Activated T-helper 2 cell treated with anti-CD3 and anti-CD28 coated beads, Interferon-gamma antibody, Interleukin-2, Interleukin-4, amounts not matched to agents 10 μg/mL and 5 μg/mL and 100 μg/mL, durations not matched to agents 14 hours and 24 hours and 36 hours (primary cell): ENCODE measurements at regions of chr14 and their contacts with region 1.

Region 1: DNA sequence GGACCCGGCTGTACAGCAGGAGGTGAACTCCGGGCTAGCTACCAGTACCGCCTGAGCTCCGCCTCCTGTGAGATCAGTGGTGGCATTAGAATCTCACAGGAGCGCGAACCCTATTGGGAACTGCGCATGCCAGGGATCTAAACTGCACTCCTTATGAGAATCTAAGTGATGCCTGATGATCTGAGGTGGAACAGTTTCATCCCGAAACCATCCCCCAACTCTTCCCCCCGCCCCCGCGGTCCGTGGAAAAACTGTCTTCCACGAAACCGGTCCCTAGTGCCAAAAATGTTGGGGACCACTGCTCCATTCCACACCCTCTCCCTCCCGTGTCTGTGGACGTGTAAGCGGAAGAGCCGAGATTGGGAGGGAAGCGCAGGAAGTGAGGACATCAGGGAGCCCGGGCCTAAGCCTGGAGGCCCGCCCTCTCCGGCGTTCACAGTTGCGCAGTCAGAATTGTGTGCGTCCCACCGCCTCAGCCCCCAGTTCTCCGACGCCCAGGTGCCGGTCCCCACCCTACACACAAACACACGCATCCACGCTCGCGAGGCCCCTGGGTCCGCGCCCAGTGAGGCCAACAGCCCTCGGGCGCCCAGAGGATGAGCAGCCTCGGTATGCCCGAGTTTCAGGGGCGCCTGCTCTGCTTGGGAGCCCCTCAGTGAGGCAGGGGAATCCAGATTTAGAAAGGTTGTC is 1.8 kb upstream of the RNASE4 start:
- DNase-seq: peak; percentile 68
- H3K4me3 Mint-ChIP-seq: no peak overlapping the region
- H3K27ac Mint-ChIP-seq: no peak overlapping the region
- H3K4me1 Mint-ChIP-seq: peaks cover 26% of the 10 kb centered on the region
- H3K27me3 Mint-ChIP-seq: peaks cover 2% of the 10 kb centered on the region

Region 2: DNA sequence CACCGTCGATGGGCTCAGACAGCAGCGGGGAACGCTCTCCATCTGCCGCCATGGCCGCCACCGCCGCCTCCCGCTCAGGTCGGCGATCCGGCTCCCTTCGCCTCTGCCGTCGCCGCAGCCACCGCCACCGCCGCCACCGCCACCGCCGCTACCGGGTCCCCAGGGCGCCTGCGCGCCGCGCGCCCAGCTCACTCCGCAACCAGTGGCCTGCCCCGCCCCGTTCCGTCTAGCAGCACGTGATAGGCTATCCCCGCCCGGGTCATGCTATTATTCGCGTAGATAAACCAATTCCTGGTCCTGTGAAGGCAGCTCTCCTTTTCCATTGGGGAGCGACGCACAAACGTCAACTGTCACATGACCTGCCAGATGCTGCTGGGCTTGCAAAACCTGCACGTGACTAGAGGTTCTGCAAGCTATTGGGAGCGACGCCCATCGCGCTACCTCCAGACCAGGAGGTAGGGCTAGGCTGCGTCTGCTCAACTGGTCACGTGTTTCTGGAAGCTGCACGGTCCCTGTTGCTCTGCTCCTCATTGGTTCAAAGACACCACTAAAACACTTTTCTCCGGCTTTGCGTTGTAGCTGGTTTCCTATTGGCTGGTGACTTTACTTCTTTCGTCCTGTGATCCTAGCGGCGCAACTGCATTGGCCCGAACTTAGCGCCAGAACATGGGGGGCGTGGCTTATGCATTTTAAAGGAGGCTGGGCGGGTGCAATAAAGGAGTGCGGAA is 221.1 kb before region 1 on chr14 and contains the start of gene PIP4P1:
- intact Hi-C with region 1: loop called (anchors 2 kb)
- DNase-seq: peak; percentile 99
- H3K4me3 Mint-ChIP-seq: peak within 1 kb of the TSS; percentile 89
- H3K27ac Mint-ChIP-seq: peak within 1 kb of the TSS; percentile 92
- H3K4me1 Mint-ChIP-seq: peaks cover 25% of the 10 kb centered on the region
- H3K27me3 Mint-ChIP-seq: peaks cover under 1% of the 10 kb centered on the region
- total RNA-seq, gene PIP4P1: 28.2 and 33.7 TPM in 2 replicates

Region 3: DNA sequence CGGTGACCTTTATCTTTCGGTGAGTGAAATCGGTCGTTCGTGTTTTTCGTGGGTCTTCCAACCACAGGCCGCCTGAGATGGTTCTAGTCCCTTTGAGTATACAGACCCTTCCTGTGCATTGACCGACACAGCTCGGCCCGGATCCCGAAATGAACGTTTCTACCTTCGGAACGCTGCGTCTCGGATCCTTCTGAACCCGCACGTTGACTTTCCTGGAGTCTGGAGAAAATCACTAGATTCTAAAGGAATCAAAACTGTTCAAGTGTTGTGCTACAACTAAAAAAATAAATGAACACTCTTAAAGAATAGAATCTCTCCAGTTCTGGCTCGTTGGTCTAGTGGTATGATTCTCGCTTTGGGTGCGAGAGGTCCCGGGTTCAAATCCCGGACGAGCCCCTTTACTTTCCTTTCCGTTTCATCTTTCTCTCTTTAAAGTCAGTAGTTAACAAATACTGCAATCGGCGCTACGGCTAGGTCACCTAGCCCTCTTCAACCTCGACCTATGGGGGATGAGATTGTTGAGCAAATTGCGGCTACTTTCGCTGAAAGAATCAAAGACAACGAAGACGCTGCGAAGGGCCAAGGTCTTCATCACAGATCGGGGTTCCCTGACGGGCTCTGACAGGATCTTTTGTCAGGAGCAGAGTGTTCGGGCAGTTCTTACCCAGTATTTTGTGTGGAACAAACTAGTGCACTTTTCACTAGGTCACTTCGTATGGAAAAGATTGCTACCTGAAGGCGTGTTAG is 49.7 kb before region 1 on chr14:
- intact Hi-C with region 1: loop called (anchors 1 kb)
- DNase-seq: peak; percentile 63
- H3K4me3 Mint-ChIP-seq: peak overlapping the region; percentile 75
- H3K27ac Mint-ChIP-seq: peak overlapping the region; percentile 72
- H3K4me1 Mint-ChIP-seq: peaks cover 35% of the 10 kb centered on the region
- H3K27me3 Mint-ChIP-seq: peaks cover 63% of the 10 kb centered on the region

Region 4: DNA sequence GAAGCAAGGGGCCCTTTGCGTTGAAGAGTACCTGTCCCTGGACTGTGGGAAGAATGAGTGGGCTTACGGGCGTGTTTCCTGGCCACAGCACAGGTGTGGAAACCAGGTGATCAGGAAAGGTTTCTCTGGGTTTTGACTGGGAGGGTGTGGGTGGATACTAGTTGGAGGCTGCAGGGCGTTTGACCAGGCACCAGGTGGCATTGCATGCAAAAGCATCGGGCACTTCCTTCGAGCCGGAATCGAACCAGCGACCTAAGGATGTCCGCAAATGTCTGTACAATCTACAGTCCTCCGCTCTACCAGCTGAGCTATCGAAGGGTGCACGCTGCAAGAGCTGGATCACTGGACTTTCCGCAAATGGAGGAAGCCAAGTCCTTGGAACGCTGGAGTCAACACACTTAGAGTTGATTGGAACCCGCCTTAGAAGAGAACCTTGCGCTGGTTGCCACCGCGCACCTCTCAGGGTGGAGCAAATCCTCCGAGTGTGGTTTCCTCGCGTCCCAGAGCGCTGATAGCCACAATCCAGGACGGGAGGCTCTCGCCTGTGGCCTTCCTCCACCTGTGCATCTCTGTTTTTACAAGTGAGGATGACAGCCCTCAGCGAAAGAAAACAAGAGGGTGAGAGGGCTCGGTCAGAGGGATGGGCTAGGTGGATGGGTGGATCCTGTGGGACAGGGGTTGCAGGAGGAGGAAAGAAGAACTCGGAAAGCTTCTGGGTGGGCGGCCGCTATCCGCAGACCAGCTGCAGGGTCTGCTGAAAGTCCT is 19.4 kb before region 1 on chr14:
- intact Hi-C with region 1: loop called (anchors 1 kb)
- DNase-seq: peak; percentile 77
- H3K4me3 Mint-ChIP-seq: peak overlapping the region; percentile 80
- H3K27ac Mint-ChIP-seq: no peak overlapping the region
- H3K4me1 Mint-ChIP-seq: peaks cover 36% of the 10 kb centered on the region
- H3K27me3 Mint-ChIP-seq: peaks cover 9% of the 10 kb centered on the region

Region 5: DNA sequence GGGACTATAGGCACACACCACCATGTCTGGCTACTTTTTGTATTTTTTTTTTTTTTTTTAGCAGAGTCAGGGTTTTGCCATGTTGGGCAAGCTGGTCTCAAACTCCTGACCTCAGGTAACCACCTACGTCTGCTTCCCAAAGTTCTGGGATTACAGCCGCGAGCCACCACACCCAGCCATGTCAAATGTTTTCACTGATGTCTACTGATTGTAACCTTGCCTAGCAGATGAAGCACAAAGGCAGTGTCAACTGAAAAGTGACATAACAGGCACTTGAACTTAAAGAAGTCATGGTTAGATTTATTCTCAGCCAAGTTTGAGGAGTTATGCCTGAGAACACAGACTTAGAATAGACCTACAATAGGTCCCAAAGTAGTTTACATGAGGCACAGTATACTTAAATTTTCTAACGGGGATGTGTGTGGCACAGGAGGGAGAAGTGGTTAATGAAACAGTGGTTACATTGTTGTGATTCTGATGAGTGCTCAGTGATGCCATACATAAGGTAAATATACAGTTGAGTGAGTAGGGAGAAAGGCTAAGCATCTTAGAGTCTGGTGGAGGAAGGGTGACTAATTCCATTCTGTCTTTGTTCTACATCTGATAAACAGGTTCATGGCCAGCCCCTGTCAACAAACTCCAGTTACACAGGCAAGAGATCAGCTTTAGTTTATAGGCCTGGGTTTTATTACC is 10.8 kb before region 1 on chr14:
- intact Hi-C with region 1: loop called (anchors 1 kb)
- DNase-seq: no peak
- H3K4me3 Mint-ChIP-seq: no peak overlapping the region
- H3K27ac Mint-ChIP-seq: no peak overlapping the region
- H3K4me1 Mint-ChIP-seq: peaks cover 40% of the 10 kb centered on the region
- H3K27me3 Mint-ChIP-seq: no peaks in the 10 kb centered on the region